Right ventricle myocardium superior (tissue), 1 donor: ENCODE measurements at regions of chr22 and their contacts with region 1.

Region 1: GRCh38 chr22:43346521-43346929 is 3.4 kb upstream of the SCUBE1 start:
- DNase-seq: peak; percentile 81
- ATAC-seq: peak; percentile 74

Region 2: DNA sequence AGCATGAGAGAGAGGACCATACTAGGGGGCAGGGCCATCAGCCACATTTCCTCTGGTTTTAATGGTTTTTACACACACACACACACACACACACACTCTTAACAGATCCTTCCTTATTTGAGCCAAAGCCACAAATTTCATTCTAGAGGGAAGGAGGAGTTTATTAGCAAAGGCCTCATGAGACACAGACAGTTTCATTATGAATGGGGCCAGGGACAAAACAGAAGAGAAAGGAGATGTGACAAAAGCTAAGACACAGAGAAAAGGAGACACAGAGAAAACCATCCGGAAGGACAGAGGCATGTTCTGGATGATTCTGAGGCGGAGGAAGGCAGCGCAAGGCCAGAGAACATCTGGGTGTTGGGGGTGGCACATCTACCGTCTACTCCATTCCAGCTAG is 457.2 kb before region 1 on chr22:
- intact Hi-C with region 1: no loop called
- DNase-seq: no peak
- ATAC-seq: no peak

Region 3: DNA sequence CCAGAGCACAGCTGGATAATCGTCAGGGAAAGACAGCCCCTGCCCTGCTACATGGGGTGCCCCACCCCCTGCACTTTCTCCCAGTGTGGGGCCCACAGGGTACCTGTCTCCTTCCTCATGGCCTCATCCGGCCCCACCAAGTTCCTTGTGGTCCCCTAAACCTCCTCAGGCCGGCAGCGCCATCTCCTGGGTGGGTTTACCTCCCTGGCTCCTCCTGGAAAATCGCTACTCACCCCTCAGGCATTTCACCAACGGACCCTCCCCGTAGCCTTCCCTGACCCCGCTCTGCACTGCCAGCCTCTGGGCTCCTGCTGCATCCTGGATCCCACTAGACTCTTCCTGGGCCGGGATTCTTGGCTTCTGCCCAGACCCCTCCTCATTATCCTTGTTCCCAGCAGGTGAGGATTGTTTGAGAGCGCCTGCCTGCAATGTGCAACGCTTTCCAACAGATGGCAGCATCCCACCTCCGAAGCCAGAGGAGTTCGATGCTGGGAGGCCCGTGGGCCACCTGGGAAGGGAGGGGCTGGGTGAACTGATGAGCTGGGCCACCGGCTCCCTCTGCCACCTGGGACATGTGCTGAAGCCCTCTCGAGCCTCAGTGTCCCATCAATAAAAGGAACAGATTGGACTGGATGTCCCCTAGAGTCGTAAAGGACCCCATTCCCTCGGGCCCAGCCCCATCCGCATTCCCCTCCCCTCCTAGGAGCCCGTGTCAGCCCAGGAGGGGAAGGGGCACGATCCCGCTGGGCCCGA is 115.4 kb before region 1 on chr22:
- intact Hi-C with region 1: loop called (anchors 5 kb)
- DNase-seq: peak; percentile 64
- ATAC-seq: peak; percentile 39

Region 4: GRCh38 chr22:43273902-43274484 is 72.5 kb before region 1 on chr22:
- intact Hi-C with region 1: loop called (anchors 2 kb)
- DNase-seq: no peak
- ATAC-seq: peak; percentile 85